ENCODE measurements at regions of chr12 and their contacts with region 1.

Region 1: GRCh38 chr12:121626087-121626852 is at the start of gene ORAI1:
- DNase-seq: peak; percentile 96
- H3K4me3 Mint-ChIP-seq: peak within 1 kb of the TSS; percentile 92
- H3K27ac Mint-ChIP-seq: peak within 1 kb of the TSS; percentile 95
- H3K4me1 Mint-ChIP-seq: peaks cover 49% of the 10 kb centered on the region
- H3K27me3 Mint-ChIP-seq: no peaks in the 10 kb centered on the region
- total RNA-seq, gene ORAI1: 61.5 and 67.0 TPM in 2 replicates

Region 2: DNA sequence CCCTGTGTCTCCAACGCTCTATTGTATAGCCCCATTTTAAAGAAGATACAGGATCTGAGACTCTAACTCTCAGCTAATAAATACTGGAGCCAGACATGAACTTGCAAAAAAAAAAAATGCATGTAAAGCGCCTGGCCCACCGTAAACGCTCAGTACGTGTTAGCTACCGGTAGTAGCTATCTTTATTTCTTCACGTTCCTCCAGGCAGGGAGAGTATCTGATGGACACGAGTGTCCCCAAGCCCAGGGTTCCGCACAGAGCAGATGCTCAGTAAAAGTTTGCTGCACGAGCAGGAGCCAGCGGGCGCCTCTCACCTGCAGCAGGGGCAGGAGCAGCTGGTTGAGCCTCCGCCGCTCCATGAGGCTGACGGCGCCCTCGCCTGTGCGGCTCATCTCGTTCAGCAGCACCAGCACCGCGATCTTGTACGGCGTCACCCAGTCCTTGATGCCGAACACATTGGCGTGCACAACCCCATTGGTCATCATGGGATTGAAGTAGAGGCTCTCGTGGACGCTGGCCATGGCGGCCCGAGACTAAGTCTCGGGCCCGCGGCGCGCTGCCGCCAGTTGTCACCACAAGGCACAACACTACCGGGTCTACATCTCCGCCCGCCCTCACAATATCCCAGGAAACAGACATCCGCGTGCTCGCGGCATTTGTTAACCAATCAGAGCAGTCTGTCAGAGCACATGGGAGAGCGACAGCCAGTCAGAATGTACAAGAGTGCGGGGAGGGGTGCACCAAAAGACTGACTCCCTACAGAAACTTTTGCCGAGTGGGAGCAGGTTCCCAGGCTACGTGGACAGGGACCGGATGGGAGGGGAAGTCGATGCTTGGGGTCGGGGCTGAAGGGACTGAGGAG is 274.2 kb before region 1 on chr12 and contains the start of gene ANAPC5:
- intact Hi-C with region 1: loop called (anchors 2 kb)
- DNase-seq: peak; percentile 90
- H3K4me3 Mint-ChIP-seq: peak within 1 kb of the TSS; percentile 95
- H3K27ac Mint-ChIP-seq: peak within 1 kb of the TSS; percentile 98
- H3K4me1 Mint-ChIP-seq: peaks cover 33% of the 10 kb centered on the region
- H3K27me3 Mint-ChIP-seq: peaks cover 10% of the 10 kb centered on the region
- total RNA-seq, gene ANAPC5: 139 and 144 TPM in 2 replicates

Region 3: DNA sequence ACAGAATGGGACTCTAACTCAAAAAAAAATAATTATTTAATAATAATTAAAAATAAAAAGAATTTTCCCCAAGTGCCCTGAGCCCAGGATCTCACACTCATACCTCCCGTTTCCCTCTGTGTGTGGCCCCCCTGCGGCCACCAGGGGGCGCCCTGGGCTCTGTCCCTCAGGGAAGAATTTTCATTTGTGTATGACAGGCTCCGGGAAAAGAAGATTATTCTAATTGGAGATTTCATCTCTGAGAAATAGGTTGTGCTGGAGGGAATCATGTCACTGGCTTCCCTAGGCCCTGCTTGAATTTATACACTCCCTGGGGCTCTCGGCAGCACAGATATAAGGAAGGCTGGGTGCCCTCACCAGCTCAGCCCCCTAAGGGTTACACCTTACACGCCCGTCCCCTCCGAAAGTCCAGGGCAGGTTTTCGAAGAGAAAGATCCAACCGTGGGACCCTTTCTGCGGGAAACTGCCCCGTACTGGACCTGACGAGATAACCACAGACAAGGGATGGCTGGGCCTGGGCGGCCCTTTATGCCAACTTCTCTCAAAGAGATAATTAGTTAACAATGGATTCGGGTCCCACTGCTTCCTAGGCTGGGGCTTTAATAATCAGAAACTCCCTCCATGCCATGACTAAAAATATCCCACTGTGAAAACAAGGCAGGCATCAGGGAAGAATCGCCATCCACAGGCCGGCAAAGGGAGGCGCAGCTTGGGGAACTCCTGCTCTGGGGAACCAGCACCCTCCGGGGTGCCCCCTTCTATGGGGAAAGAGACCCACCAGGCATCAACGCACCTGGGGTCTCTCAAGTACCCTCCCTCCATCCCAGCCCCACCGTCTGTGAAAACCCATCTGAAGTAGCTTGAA is 126.1 kb before region 1 on chr12:
- intact Hi-C with region 1: loop called (anchors 1 kb)
- DNase-seq: peak; percentile 55
- H3K4me3 Mint-ChIP-seq: no peak overlapping the region
- H3K27ac Mint-ChIP-seq: no peak overlapping the region
- H3K4me1 Mint-ChIP-seq: peaks cover 12% of the 10 kb centered on the region
- H3K27me3 Mint-ChIP-seq: no peaks in the 10 kb centered on the region

Region 4: DNA sequence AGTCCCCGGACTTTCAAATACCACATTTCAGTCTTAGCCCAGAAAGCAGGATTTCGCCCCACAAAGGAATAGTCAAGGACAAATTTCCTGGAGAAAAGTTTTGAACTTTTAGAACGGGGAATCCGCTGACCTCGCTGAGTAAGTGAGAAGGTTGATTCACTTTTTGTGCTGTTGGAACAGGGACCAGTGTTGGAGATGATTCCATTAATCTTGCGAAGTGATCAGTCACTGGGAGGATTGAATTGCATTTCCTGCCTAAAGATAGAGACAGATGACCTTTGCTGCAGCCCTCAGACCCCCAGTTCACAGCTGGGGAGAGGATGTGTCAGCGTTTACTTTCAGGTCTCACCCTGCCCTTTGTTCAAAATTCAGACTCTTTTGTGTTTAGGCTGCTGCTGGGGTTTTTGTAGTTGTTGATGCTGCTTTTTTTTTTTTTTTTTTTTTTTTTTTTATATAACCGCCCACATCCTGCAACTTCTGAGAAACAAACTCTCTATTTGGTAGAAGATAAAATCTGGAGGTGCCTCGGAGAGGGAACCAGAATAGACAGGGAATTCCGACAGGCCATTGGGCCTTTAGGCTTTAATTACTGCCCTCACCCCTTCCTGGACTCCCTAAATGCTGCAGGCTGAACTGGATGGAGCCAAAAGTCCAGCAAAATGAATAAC is 35.7 kb before region 1 on chr12:
- intact Hi-C with region 1: loop called (anchors 1 kb)
- DNase-seq: peak; percentile 64
- H3K4me3 Mint-ChIP-seq: peak overlapping the region; percentile 80
- H3K27ac Mint-ChIP-seq: peak overlapping the region; percentile 95
- H3K4me1 Mint-ChIP-seq: peaks cover 26% of the 10 kb centered on the region
- H3K27me3 Mint-ChIP-seq: no peaks in the 10 kb centered on the region

Region 5: GRCh38 chr12:121678716-121679580 is 52.7 kb after region 1 on chr12:
- intact Hi-C with region 1: loop called (anchors 1 kb)
- DNase-seq: no peak
- H3K4me3 Mint-ChIP-seq: no peak overlapping the region
- H3K27ac Mint-ChIP-seq: no peak overlapping the region
- H3K4me1 Mint-ChIP-seq: peaks cover 5% of the 10 kb centered on the region
- H3K27me3 Mint-ChIP-seq: no peaks in the 10 kb centered on the region

Region 6: GRCh38 chr12:121839106-121839992 is 213.1 kb after region 1 on chr12:
- intact Hi-C with region 1: loop called (anchors 1 kb)
- DNase-seq: peak; percentile 99
- H3K4me3 Mint-ChIP-seq: peak overlapping the region; percentile 95
- H3K27ac Mint-ChIP-seq: peak overlapping the region; percentile 79
- H3K4me1 Mint-ChIP-seq: peaks cover 16% of the 10 kb centered on the region
- H3K27me3 Mint-ChIP-seq: peaks cover 4% of the 10 kb centered on the region

Measured in activated T-helper 1 cell treated with anti-CD3 and anti-CD28 coated beads, Interleukin-12 subunit alpha, Interleukin-12 subunit beta, Interleukin-2, Interleukin-4 antibody, amounts not matched to agents 30 ng/mL and 10 ng/mL and 1 ng/mL, durations not matched to agents 14 hours and 24 hours and 36 hours (primary cell).